ENCODE measurements at regions of chr7 and their contacts with region 1.

Region 1: GRCh38 chr7:50369143-50370026 is 64.9 kb downstream of the IKZF1 start:
- DNase-seq: no peak
- H3K4me3 Mint-ChIP-seq: peak overlapping the region; percentile 45
- H3K27ac Mint-ChIP-seq: peak overlapping the region; percentile 94
- H3K4me1 Mint-ChIP-seq: peaks cover 95% of the 10 kb centered on the region
- H3K27me3 Mint-ChIP-seq: no peaks in the 10 kb centered on the region

Region 2: GRCh38 chr7:49937608-49938007 is 431.8 kb before region 1 on chr7:
- intact Hi-C with region 1: no loop called
- DNase-seq: no peak
- H3K4me3 Mint-ChIP-seq: no peak overlapping the region
- H3K27ac Mint-ChIP-seq: no peak overlapping the region
- H3K4me1 Mint-ChIP-seq: no peaks in the 10 kb centered on the region
- H3K27me3 Mint-ChIP-seq: no peaks in the 10 kb centered on the region

Region 3: GRCh38 chr7:50142425-50143017 is 226.9 kb before region 1 on chr7:
- intact Hi-C with region 1: loop called (anchors 1 kb)
- DNase-seq: no peak
- H3K4me3 Mint-ChIP-seq: peak overlapping the region; percentile 30
- H3K27ac Mint-ChIP-seq: peak overlapping the region; percentile 77
- H3K4me1 Mint-ChIP-seq: peaks cover 44% of the 10 kb centered on the region
- H3K27me3 Mint-ChIP-seq: peaks cover 2% of the 10 kb centered on the region

Region 4: DNA sequence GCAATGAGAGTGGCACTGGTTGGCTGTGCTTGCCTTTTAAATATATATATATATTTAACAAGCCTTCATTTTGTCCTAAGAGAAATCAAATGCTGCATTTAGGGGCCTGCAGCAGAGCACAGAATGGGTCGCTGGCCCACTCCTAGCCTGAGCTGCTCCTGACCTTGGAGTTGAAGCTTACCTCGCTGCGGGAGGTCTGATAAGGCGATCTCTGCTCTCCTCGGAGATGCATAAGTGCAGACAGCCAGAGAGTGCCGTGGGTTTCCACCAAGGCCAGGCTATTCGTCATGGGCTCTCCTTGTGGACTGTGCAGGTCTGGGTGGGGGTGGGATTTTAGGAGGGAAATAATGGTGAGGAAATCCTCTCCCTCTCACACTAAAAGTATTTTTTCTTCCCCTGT is 164.4 kb before region 1 on chr7:
- intact Hi-C with region 1: loop called (anchors 1 kb)
- DNase-seq: no peak
- H3K4me3 Mint-ChIP-seq: no peak overlapping the region
- H3K27ac Mint-ChIP-seq: no peak overlapping the region
- H3K4me1 Mint-ChIP-seq: peaks cover 83% of the 10 kb centered on the region
- H3K27me3 Mint-ChIP-seq: no peaks in the 10 kb centered on the region

Region 5: GRCh38 chr7:50317221-50317678 is 52.1 kb before region 1 on chr7:
- intact Hi-C with region 1: loop called (anchors 1 kb)
- DNase-seq: peak; percentile 52
- H3K4me3 Mint-ChIP-seq: peak overlapping the region; percentile 78
- H3K27ac Mint-ChIP-seq: peak overlapping the region; percentile 92
- H3K4me1 Mint-ChIP-seq: peaks cover 90% of the 10 kb centered on the region
- H3K27me3 Mint-ChIP-seq: no peaks in the 10 kb centered on the region

Region 6: DNA sequence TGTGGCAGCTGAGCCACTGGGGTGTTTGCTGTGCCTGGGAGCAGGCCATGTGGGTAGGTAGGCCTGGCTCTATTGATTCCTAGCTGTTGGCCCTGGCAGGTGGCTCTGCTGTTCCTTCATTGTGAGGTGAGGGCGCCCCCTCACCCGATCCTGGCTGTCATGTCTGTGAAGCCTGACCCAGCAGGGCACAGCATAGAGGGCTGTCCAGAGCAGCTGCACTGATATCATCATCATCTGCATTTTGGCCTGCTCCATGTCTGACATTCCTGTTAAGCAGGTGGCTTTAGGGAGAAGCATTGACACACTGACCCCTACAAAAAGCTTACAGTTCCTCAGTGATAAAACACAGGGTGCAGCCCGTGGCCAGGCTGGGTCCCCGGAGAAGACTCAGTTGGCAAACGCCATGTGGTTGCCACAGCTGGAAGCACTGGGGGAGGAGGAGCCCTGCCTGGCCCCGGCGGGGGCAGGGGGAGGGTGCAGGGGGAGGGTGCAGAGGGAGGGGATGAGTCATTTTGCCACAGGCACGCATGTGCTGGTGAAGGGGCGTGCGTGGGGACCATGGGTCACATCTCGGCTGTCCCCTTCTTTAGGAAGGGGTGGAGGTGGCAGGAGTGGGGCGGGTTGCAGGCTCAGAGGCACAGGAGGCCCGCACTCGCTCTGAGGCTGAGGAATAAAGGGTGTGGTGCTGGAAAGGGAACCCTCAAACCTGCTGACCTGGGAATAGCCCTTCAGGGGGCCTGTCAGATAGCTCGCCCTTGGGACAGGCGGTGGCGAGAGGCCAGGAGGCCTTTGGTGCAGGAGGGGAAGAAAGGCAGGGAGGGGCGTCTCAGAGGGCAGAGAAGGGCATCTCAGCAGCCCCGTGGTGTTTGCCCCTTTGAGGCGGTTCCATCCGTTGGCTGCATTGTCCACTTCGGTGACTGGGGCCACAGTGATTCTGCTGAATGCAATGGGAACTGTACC is 33.3 kb before region 1 on chr7:
- intact Hi-C with region 1: loop called (anchors 1 kb)
- DNase-seq: peak; percentile 77
- H3K4me3 Mint-ChIP-seq: no peak overlapping the region
- H3K27ac Mint-ChIP-seq: no peak overlapping the region
- H3K4me1 Mint-ChIP-seq: peaks cover 62% of the 10 kb centered on the region
- H3K27me3 Mint-ChIP-seq: no peaks in the 10 kb centered on the region

Region 7: GRCh38 chr7:50349963-50350944 is 19.1 kb before region 1 on chr7:
- intact Hi-C with region 1: loop called (anchors 1 kb)
- DNase-seq: peak; percentile 80
- H3K4me3 Mint-ChIP-seq: peak overlapping the region; percentile 49
- H3K27ac Mint-ChIP-seq: peak overlapping the region; percentile 91
- H3K4me1 Mint-ChIP-seq: peaks cover 96% of the 10 kb centered on the region
- H3K27me3 Mint-ChIP-seq: no peaks in the 10 kb centered on the region